Activated CD4-positive, alpha-beta T cell treated with anti-CD3 and anti-CD28 coated beads, Interleukin-2, amount 10 ng/mL, durations not matched to agents 24 days and 14 days (primary cell): ENCODE measurements at regions of chr1 and their contacts with region 1.

Region 1: DNA sequence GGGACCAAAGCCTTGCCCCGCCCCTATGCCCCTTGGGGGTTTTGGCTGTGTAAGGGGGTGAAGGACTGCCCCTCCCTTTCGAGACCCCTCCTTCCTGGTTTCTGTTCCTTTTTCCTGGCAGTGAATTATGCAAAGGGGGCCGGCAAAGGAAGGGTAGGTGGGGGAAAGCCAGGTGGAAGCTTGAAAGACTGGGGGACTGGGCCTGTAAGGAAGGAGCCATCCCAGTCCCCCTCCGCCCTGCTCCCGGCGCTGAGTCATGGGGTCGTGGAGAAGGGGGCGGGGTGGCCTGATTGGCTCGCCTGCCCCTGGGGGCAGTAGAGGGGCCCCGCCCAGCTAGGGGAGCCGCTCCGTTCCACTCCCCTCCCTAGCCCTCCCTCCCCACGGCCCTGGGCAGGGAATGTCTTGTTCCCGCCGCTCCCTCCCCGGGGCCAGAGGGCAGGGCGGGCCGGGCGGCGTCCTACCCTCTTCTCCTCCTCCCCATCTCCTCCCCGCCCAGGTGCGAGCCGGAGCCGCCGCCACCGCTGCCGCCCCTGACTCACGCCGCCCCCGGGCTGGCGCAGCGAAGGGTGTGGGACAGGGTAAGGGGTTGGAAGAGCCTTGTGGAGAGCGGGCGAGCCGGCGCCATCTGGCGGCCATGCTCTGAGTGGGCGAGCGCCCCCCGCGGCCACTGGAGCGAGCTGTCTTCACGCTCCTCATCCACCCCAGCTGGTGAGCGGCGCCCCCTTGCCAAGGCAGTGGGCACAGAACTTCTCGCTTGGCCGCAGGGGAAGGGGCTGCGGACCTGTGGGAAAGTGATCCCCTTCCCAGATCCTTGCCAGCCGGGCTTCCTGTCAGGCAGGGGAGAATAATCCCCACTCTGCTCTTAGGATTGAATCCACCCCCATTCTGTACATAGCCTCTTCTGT is 14.7 kb downstream of the ZBTB7B start:
- DNase-seq: peak; percentile 96
- H3K4me3 Mint-ChIP-seq: peak overlapping the region; percentile 78
- H3K27ac Mint-ChIP-seq: peak overlapping the region; percentile 37
- H3K4me1 Mint-ChIP-seq: peaks cover 52% of the 10 kb centered on the region
- H3K27me3 Mint-ChIP-seq: no peaks in the 10 kb centered on the region

Region 2: DNA sequence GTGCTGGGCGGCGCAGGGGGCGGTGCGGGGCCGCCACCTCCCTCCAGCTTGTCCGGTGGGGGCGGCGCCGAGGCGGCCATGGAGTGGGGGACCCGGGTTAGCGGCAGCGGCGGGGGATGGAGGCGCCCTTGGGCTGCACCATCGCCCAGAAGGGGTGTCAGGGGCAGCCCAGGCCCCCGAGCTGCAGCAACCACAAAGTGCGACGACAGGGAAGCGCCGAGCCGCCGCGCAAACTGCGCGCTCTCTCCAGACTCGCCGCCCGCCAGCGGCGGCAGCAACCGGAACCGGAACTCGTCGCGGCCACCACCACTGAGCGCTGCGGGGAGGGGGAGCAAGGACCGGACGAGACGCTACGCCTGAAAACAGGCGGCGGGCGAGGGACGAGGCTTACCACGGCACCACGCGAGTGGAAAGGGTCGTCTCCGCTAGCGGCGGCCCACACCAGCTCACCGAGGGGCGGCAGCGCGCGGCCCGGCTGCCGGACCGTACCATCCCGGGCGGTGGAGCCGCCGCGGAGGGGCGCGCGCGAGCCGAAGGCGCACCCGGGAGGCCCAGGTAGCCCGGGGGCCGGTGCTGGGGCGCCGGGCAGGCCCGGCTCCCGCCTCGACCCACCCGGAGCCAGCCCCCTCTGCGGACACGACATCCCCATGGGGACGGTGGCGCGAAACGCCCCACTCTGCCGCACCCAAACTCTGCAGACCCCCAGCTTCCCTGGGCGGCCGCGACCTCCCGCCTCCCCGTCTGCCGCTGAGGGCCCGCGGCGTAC is 55.6 kb before region 1 on chr1 and contains the start of gene PYGO2:
- intact Hi-C with region 1: loop called (anchors 1 kb)
- DNase-seq: peak; percentile 96
- H3K4me3 Mint-ChIP-seq: peak within 1 kb of the TSS; percentile 96
- H3K27ac Mint-ChIP-seq: peak within 1 kb of the TSS; percentile 89
- H3K4me1 Mint-ChIP-seq: peaks cover 26% of the 10 kb centered on the region
- H3K27me3 Mint-ChIP-seq: no peaks in the 10 kb centered on the region
- total RNA-seq, gene PYGO2: 34.4 and 34.8 TPM in 2 replicates

Region 3: DNA sequence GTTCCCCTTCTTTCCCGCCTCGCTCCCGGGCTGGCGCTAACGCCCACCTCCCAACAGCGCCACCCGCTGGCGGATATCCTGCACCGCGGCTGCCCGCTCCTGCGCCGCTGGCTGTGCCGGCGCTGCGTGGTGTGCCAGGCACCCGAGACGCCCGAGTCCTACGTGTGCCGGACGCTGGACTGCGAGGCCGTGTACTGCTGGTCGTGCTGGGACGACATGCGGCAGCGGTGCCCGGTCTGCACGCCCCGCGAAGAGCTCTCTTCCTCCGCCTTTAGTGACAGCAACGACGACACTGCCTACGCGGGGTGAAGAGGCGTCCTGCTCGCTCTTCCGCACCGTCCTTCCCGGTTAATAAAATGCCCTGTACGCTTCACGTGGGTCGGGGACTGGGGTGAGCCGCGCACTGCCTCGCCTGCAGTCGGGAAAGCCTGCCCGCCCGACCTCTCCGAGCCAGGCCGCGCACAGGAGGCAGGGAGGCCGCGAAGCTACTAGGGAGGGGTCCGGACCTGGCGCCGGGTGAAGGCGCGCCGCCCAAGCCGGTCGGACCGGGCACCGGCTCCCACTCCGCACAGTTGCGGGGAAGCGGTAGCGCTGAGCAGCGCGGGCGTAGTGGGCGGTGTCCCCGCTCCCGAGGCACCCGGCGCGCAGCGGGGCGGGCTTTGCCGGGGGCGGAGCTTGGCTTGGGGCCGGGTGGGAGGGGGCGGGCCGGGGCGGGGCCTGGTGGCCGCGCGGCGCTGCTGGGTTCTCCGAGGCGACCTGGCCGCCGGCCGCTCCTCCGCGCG is 33.5 kb after region 1 on chr1 and contains the start of gene ADAM15:
- intact Hi-C with region 1: loop called (anchors 1 kb)
- DNase-seq: peak; percentile 96
- H3K4me3 Mint-ChIP-seq: peak within 1 kb of the TSS; percentile 88
- H3K27ac Mint-ChIP-seq: peak within 1 kb of the TSS; percentile 89
- H3K4me1 Mint-ChIP-seq: peaks cover 22% of the 10 kb centered on the region
- H3K27me3 Mint-ChIP-seq: no peaks in the 10 kb centered on the region
- total RNA-seq, gene ADAM15: 79.7 and 84.5 TPM in 2 replicates

Region 4: GRCh38 chr1:155078469-155079209 is 61.3 kb after region 1 on chr1 and contains the start of gene EFNA3:
- intact Hi-C with region 1: no loop called
- DNase-seq: peak; percentile 92
- H3K4me3 Mint-ChIP-seq: peak within 1 kb of the TSS; percentile 80
- H3K27ac Mint-ChIP-seq: no peak within 1 kb of the TSS
- H3K4me1 Mint-ChIP-seq: peaks cover 44% of the 10 kb centered on the region
- H3K27me3 Mint-ChIP-seq: peaks cover 36% of the 10 kb centered on the region
- total RNA-seq, gene EFNA3: 3.6 and 4.4 TPM in 2 replicates